Activated B cell treated with CpG ODN at 0.5 μM for 24 hours (primary cell): ENCODE measurements at regions of chr1 and their contacts with region 1.

Region 1: DNA sequence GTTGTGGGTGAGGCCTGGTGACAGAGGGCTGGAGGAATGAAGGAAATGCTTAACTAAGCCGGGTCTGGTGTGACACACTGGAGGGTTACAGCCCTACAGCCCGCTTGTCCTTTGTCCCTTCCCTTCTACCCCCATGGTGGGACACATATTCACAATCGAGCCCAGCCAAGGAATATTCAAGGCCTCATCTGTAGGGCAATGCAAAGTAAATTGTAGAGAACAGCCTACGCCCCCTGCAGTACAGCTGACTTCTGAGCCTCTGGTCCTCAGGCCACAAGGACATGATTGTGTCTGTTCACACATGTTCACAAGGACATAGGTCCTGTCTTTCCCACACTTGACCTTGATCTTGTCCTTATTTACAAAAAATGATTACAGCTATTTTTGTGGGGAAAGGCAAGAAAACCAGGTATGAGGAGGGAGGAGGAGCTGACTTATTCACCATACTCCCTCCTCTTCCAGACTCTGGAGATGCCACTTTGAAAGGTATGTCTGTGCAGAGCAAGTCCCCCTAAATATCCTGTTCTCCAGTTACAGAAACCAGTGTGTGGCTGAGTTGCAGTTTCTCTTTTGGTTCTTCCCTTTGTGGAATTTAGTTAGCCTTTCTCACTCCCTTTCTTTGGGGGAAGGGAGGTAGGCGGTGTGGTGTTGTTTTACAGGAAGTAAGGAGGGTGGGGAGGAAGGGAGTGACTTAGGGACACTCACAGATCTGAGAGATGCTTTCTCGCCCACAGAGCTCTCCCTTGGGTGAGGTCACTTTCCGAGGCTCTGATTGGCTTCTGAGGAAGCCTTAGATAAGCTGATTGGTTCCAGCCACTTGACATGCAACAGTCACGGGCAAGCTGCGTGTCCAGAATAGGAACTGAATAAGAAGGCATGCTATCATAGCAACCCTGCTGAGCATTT is 14.6 kb downstream of the POLR3GL start:
- DNase-seq: peak; percentile 55
- ATAC-seq: peak; percentile 81
- H3K4me3 Mint-ChIP-seq: no peak overlapping the region
- H3K27ac Mint-ChIP-seq: no peak overlapping the region
- H3K4me1 Mint-ChIP-seq: no peaks in the 10 kb centered on the region
- H3K27me3 Mint-ChIP-seq: no peaks in the 10 kb centered on the region
- CTCF ChIP-seq: no peak

Region 2: GRCh38 chr1:145918144-145918992 is 60.7 kb before region 1 on chr1 and contains the start of gene PEX11B:
- CTCF ChIA-PET with region 1: interaction called, 3 read pairs
- POLR2A ChIA-PET with region 1: interaction called, 28 read pairs
- intact Hi-C with region 1: no loop called
- DNase-seq: peak; percentile 88
- ATAC-seq: peak; percentile 90
- H3K4me3 Mint-ChIP-seq: peak within 1 kb of the TSS; percentile 95
- H3K27ac Mint-ChIP-seq: peak within 1 kb of the TSS; percentile 93
- H3K4me1 Mint-ChIP-seq: peaks cover 35% of the 10 kb centered on the region
- H3K27me3 Mint-ChIP-seq: no peaks in the 10 kb centered on the region
- CTCF ChIP-seq: no peak
- total RNA-seq, gene PEX11B: 42.7 and 47.7 TPM in 2 replicates

Region 3: GRCh38 chr1:145957443-145958319 is 21.4 kb before region 1 on chr1 and contains the start of gene LIX1L:
- CTCF ChIA-PET with region 1: interaction called, 5 read pairs
- POLR2A ChIA-PET with region 1: interaction called, 36 read pairs
- intact Hi-C with region 1: loop called (anchors 1 kb)
- DNase-seq: peak; percentile 87
- ATAC-seq: peak; percentile 89
- H3K4me3 Mint-ChIP-seq: peak within 1 kb of the TSS; percentile 96
- H3K27ac Mint-ChIP-seq: peak within 1 kb of the TSS; percentile 94
- H3K4me1 Mint-ChIP-seq: peaks cover 64% of the 10 kb centered on the region
- H3K27me3 Mint-ChIP-seq: no peaks in the 10 kb centered on the region
- CTCF ChIP-seq: no peak
- total RNA-seq, gene LIX1L: 30.1 and 31.7 TPM in 2 replicates

Region 4: GRCh38 chr1:145990249-145991097 is 11.4 kb after region 1 on chr1:
- CTCF ChIA-PET with region 1: interaction called, 52 read pairs
- POLR2A ChIA-PET with region 1: interaction called, 579 read pairs
- intact Hi-C with region 1: loop called (anchors 1 kb)
- DNase-seq: no peak
- ATAC-seq: no peak
- H3K4me3 Mint-ChIP-seq: no peak overlapping the region
- H3K27ac Mint-ChIP-seq: peak overlapping the region; percentile 61
- H3K4me1 Mint-ChIP-seq: peaks cover 72% of the 10 kb centered on the region
- H3K27me3 Mint-ChIP-seq: no peaks in the 10 kb centered on the region
- CTCF ChIP-seq: no peak

Region 5: DNA sequence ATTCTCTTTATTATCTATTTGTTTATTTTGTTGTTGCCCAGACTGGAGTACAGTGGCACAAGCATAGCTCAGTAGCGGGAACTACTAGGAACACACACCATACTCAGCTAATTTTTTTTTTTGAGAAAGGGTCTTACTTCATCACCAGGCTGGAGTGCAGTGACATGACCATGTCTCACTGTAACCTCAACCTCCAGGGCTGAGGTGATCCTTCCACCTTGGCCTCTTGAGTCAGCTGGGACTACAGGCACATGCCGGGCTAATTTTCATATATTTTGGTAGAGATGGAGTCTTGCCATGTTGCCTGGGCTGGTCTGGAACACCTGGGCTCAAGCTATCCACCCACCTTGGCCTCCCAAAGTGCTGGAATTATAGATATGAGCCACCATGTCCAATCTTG is 22.6 kb after region 1 on chr1:
- CTCF ChIA-PET with region 1: interaction called, 247 read pairs
- POLR2A ChIA-PET with region 1: interaction called, 579 read pairs
- intact Hi-C with region 1: loop called (anchors 1 kb)
- DNase-seq: no peak
- ATAC-seq: no peak
- H3K4me3 Mint-ChIP-seq: no peak overlapping the region
- H3K27ac Mint-ChIP-seq: peak overlapping the region; percentile 69
- H3K4me1 Mint-ChIP-seq: peaks cover 64% of the 10 kb centered on the region
- H3K27me3 Mint-ChIP-seq: no peaks in the 10 kb centered on the region
- CTCF ChIP-seq: no peak

Region 6: GRCh38 chr1:146012737-146013403 is 33.8 kb after region 1 on chr1:
- CTCF ChIA-PET with region 1: interaction called, 247 read pairs
- POLR2A ChIA-PET with region 1: interaction called, 136 read pairs
- intact Hi-C with region 1: loop called (anchors 1 kb)
- DNase-seq: no peak
- ATAC-seq: peak; percentile 62
- H3K4me3 Mint-ChIP-seq: no peak overlapping the region
- H3K27ac Mint-ChIP-seq: no peak overlapping the region
- H3K4me1 Mint-ChIP-seq: peaks cover 4% of the 10 kb centered on the region
- H3K27me3 Mint-ChIP-seq: peaks cover 6% of the 10 kb centered on the region
- CTCF ChIP-seq: peak; percentile 79

Region 7: GRCh38 chr1:146049436-146049835 is 70.3 kb after region 1 on chr1:
- CTCF ChIA-PET with region 1: no interaction called
- POLR2A ChIA-PET with region 1: interaction called, 23 read pairs
- intact Hi-C with region 1: no loop called
- DNase-seq: no peak
- ATAC-seq: no peak
- H3K4me3 Mint-ChIP-seq: no peak overlapping the region
- H3K27ac Mint-ChIP-seq: no peak overlapping the region
- H3K4me1 Mint-ChIP-seq: peaks cover 22% of the 10 kb centered on the region
- H3K27me3 Mint-ChIP-seq: no peaks in the 10 kb centered on the region
- CTCF ChIP-seq: no peak